Panc1 (cell line): ENCODE measurements at regions of chr9 and their contacts with region 1.

Region 1: DNA sequence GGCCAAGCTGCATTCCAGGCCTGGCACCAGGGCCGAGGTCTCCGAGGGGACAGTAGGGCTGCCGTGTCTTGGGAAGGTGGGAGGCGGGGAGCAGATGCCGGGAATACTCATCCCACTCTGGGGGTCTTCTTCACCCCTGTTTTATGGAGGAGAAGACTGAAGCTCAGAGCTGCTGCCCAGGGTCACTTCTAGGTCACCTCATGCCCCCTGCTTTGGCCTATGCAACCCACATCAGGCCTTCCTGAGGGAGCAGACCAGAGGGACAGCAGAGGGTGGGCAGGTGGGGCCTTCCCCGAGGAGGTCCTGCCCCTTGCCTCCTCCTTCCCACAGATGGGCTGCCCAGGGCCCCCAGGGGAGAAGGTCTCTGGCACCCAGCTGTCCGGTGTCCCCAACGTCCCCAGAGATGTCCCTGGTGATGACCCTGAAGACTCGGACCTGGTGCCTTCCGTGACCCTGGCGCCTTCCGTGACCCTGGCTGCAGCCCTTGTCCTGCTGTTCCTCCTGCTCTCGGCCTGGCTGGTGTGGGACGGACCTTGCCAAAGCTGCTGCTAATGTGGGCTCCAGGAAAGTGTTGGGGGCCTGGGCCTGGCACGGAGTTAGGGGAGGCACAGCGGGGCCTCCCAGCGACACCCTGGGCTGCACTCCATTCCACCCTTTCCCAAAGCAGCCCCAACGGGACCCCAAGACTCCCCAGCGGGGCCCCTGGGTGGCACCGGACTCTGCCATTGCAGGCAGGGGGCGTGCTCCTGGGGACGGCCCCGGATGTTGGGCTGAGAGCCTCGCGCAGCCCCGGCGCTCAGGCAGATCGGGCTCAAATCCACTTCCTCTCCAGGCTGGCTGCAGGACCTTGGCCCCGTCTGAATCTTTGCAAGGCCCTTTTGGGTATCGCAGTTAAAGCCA is 6.7 kb upstream of the SLC2A6 start:
- DNase-seq: no peak
- ATAC-seq: peak; percentile 61
- H3K4me3 ChIP-seq: no peak overlapping the region
- H3K27ac ChIP-seq: no peak overlapping the region
- H3K4me1 ChIP-seq: peaks cover 2% of the 10 kb centered on the region; the same call in 1 of the 2 replicates
- H3K27me3 ChIP-seq: no peaks in the 10 kb centered on the region
- CTCF ChIP-seq: no peak

Region 2: GRCh38 chr9:133144137-133144903 is 341.3 kb before region 1 on chr9:
- CTCF ChIA-PET with region 1: no interaction called
- POLR2A ChIA-PET with region 1: no interaction called
- in situ Hi-C with region 1: no loop called
- intact Hi-C with region 1: no loop called
- DNase-seq: no peak
- ATAC-seq: peak; percentile 29
- H3K4me3 ChIP-seq: peak overlapping the region; percentile 14 to 33
- H3K27ac ChIP-seq: peak overlapping the region; percentile 54; the same call in 1 of the 2 replicates
- H3K4me1 ChIP-seq: peaks cover 31% of the 10 kb centered on the region
- H3K27me3 ChIP-seq: no peaks in the 10 kb centered on the region
- CTCF ChIP-seq: peak; percentile 96

Region 3: GRCh38 chr9:133356391-133357091 is 129.1 kb before region 1 on chr9 and contains the starts of genes SURF1 and SURF2:
- CTCF ChIA-PET with region 1: no interaction called
- POLR2A ChIA-PET with region 1: no interaction called
- in situ Hi-C with region 1: no loop called
- intact Hi-C with region 1: loop called (anchors 10 kb)
- DNase-seq: no peak
- ATAC-seq: peak; percentile 88
- H3K4me3 ChIP-seq: peak within 1 kb of the TSS; percentile 59 to 78
- H3K27ac ChIP-seq: peak within 1 kb of the TSS; percentile 90
- H3K4me1 ChIP-seq: peaks cover 8% of the 10 kb centered on the region; the same call in 1 of the 2 replicates
- H3K27me3 ChIP-seq: no peaks in the 10 kb centered on the region
- CTCF ChIP-seq: no peak
- total RNA-seq, gene SURF1: 45.6 TPM
- total RNA-seq, gene SURF2: 19.2 TPM

Region 4: GRCh38 chr9:133880851-133881661 is 395.4 kb after region 1 on chr9:
- CTCF ChIA-PET with region 1: no interaction called
- POLR2A ChIA-PET with region 1: no interaction called
- in situ Hi-C with region 1: no loop called
- intact Hi-C with region 1: no loop called
- DNase-seq: no peak
- ATAC-seq: no peak
- H3K4me3 ChIP-seq: no peak overlapping the region
- H3K27ac ChIP-seq: no peak overlapping the region
- H3K4me1 ChIP-seq: no peaks in the 10 kb centered on the region
- H3K27me3 ChIP-seq: no peaks in the 10 kb centered on the region
- CTCF ChIP-seq: no peak